ENCODE measurements at regions of chr6 and their contacts with region 1.

Region 1: GRCh38 chr6:30769088-30769852 is 24.9 kb upstream of the IER3 start:
- DNase-seq: no peak
- ATAC-seq: peak; percentile 38
- H3K4me3 ChIP-seq: no peak overlapping the region
- H3K27ac ChIP-seq: no peak overlapping the region; the same call in 1 of the 2 replicates
- H3K4me1 ChIP-seq: peaks cover 33% of the 10 kb centered on the region
- H3K27me3 ChIP-seq: no peaks in the 10 kb centered on the region
- CTCF ChIP-seq: no peak
- EP300 ChIP-seq: peak in 1 of 2 experiments; percentile 56; a peak in 2 of 4 replicates
- POLR2A ChIP-seq: no peak
- RAD21 ChIP-seq: no peak

Region 2: DNA sequence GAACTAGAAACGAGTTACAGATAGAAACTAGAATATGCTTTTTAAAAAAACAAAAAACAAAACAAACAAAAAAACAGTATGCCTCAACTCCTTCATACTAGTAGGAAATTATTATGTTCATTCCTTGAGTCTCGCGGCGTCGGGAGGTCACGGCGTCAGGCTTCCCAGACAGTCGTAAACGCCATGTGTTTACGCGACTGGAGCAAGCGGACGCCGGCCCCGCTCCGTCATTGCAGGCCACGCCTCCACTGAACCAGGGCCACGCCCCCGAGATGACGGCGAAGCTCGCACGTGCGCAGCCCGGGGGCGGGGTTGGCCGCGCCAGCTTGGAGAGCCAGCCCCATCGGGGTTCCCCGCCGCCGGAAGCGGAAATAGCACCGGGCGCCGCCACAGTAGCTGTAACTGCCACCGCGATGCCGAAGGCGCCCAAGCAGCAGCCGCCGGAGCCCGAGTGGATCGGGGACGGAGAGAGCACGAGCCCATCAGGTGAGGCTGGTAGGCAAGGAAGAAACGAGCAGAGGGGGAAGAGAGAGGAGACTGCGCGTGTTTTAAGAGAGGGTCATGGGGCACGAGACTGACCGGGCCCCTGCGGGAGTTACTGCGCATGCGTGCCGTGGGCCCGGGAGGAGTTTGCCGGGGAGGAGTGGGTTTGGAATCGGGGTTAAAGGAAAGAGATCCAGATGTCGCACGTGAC is 198.0 kb before region 1 on chr6 and contains the start of gene ABCF1:
- CTCF ChIA-PET with region 1: no interaction called
- POLR2A ChIA-PET with region 1: no interaction called
- RAD21 ChIA-PET with region 1: no interaction called
- SMC1A ChIA-PET with region 1: no interaction called
- in situ Hi-C with region 1: no loop called
- intact Hi-C with region 1: no loop called
- DNase-seq: peak; percentile 85
- ATAC-seq: peak; percentile 94
- H3K4me3 ChIP-seq: peak within 1 kb of the TSS; percentile 89
- H3K27ac ChIP-seq: peak within 1 kb of the TSS; percentile 94
- H3K4me1 ChIP-seq: peaks cover 15% of the 10 kb centered on the region
- H3K27me3 ChIP-seq: no peaks in the 10 kb centered on the region
- CTCF ChIP-seq: no peak
- EP300 ChIP-seq: 0 out of 4 replicates have a peak, but pooled peaks of 1 of the 2 experiments have one; percentile 23
- POLR2A ChIP-seq: peak; percentile 96
- RAD21 ChIP-seq: no peak
- polyA plus RNA-seq, gene ABCF1: 21.3 to 26.1 TPM

Region 3: GRCh38 chr6:30781743-30782424 is 12.6 kb after region 1 on chr6:
- CTCF ChIA-PET with region 1: interaction called, 7 read pairs
- POLR2A ChIA-PET with region 1: interaction called, 19 read pairs
- RAD21 ChIA-PET with region 1: interaction called, 39 read pairs
- SMC1A ChIA-PET with region 1: interaction called, 58 read pairs
- in situ Hi-C with region 1: no loop called
- intact Hi-C with region 1: no loop called
- DNase-seq: peak; percentile 66
- ATAC-seq: peak; percentile 75
- H3K4me3 ChIP-seq: no peak overlapping the region
- H3K27ac ChIP-seq: peak overlapping the region; percentile 44
- H3K4me1 ChIP-seq: peaks cover 15% of the 10 kb centered on the region
- H3K27me3 ChIP-seq: no peaks in the 10 kb centered on the region
- CTCF ChIP-seq: no peak
- EP300 ChIP-seq: no peak; a peak in 1 of 4 replicates
- POLR2A ChIP-seq: no peak
- RAD21 ChIP-seq: no peak

Region 4: GRCh38 chr6:30787954-30788353 is 18.7 kb after region 1 on chr6:
- CTCF ChIA-PET with region 1: interaction called, 7 read pairs
- POLR2A ChIA-PET with region 1: interaction called, 19 read pairs
- RAD21 ChIA-PET with region 1: interaction called, 39 read pairs
- SMC1A ChIA-PET with region 1: interaction called, 58 read pairs
- in situ Hi-C with region 1: no loop called
- intact Hi-C with region 1: no loop called
- DNase-seq: no peak
- ATAC-seq: peak; percentile 51
- H3K4me3 ChIP-seq: no peak overlapping the region
- H3K27ac ChIP-seq: no peak overlapping the region
- H3K4me1 ChIP-seq: peaks cover 6% of the 10 kb centered on the region; the same call in 1 of the 2 replicates
- H3K27me3 ChIP-seq: no peaks in the 10 kb centered on the region
- CTCF ChIP-seq: no peak
- EP300 ChIP-seq: no peak
- POLR2A ChIP-seq: no peak
- RAD21 ChIP-seq: no peak

Region 5: DNA sequence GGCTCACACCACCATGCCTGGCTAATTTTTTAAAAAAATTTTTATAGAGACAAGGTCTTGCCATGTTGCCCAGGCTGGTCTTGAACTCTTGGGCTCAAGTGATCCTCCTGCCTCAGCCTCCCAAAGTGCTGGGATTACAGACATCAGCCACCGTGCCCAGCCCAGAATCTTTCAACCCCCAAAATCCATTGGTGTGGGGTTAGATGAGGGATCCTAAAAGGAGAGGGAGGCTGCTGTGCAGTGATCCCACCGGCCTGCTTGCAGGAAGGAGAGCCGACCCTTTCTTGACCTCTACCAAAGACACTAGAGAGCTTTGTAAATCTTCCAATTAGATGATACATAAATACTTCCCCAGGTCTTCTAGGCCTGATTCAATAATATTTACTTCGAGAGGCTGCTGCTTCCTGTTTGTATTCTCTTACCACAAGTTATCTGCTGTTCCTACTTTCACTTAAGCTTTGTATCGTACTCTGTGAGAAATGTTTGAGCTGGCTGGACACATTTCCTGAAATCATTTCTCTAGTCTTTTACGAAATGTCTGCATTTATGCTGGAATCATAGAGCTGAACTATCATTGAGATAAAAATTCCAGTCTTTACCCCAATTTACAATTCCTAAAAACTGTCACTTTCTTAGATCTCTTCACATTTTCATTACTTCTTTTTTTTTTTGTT is 24.4 kb after region 1 on chr6:
- CTCF ChIA-PET with region 1: interaction called, 7 read pairs
- POLR2A ChIA-PET with region 1: interaction called, 19 read pairs
- RAD21 ChIA-PET with region 1: interaction called, 29 read pairs
- SMC1A ChIA-PET with region 1: interaction called, 50 read pairs
- in situ Hi-C with region 1: no loop called
- intact Hi-C with region 1: no loop called
- DNase-seq: peak; percentile 57
- ATAC-seq: peak; percentile 97
- H3K4me3 ChIP-seq: no peak overlapping the region
- H3K27ac ChIP-seq: peak overlapping the region; percentile 84
- H3K4me1 ChIP-seq: peaks cover 16% of the 10 kb centered on the region
- H3K27me3 ChIP-seq: no peaks in the 10 kb centered on the region
- CTCF ChIP-seq: no peak
- EP300 ChIP-seq: 0 out of 4 replicates have a peak, but pooled peaks of 1 of the 2 experiments have one; percentile 36
- POLR2A ChIP-seq: no peak
- RAD21 ChIP-seq: no peak

Region 6: DNA sequence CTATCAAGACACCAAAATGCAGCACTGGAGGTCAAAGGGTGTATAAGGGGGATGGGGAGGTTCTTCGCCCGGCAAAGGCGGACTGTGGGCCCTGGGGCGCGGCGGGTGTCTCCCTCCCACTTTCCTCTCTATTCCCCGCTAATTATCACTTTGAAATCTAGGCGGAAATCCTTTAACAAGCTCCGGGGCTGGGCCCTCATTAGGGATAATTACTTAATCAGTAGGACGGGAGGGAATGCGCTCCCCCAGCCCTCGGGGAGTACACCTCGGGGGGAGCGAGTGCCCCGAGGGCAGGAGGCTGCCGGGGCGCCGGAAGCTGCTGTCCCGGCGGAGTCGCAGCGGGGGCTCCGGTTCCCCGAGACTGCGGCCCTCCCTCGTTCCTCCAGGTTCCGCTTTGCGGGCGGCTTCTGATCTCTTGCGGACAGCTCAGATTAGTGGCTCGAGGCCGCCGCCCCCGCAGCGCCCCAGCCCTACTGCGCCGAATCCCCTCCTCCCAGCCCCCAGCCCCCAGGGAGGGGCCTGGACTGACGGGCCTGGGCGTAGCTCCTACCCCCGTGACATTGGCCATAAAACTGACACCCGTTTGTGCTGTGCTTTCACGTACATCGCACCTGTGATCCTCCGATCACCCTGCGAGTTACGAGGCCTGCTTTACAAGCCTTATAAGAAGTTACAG is 186.2 kb after region 1 on chr6:
- CTCF ChIA-PET with region 1: no interaction called
- POLR2A ChIA-PET with region 1: no interaction called
- RAD21 ChIA-PET with region 1: no interaction called
- SMC1A ChIA-PET with region 1: no interaction called
- in situ Hi-C with region 1: no loop called
- intact Hi-C with region 1: no loop called
- DNase-seq: peak; percentile 15
- ATAC-seq: peak; percentile 94
- H3K4me3 ChIP-seq: peak overlapping the region; percentile 54; the same call in 1 of the 2 replicates
- H3K27ac ChIP-seq: no peak overlapping the region
- H3K4me1 ChIP-seq: peaks cover 21% of the 10 kb centered on the region
- H3K27me3 ChIP-seq: no peaks in the 10 kb centered on the region; a peak in 1 of 4 replicates
- CTCF ChIP-seq: no peak
- EP300 ChIP-seq: peak in 1 of 2 experiments; percentile 31; a peak in 1 of 4 replicates
- POLR2A ChIP-seq: peak; percentile 77
- RAD21 ChIP-seq: no peak

Measured in GM12878 (cell line).